Activated CD4-positive, alpha-beta T cell treated with anti-CD3 and anti-CD28 coated beads for 36 hours (primary cell): ENCODE measurements at regions of chr11 and their contacts with region 1.

Region 1: GRCh38 chr11:74321487-74322188 is 10.2 kb upstream of the P4HA3 start:
- DNase-seq: peak; percentile 54
- ATAC-seq: peak; percentile 33
- H3K4me3 Mint-ChIP-seq: no peak overlapping the region
- H3K27ac Mint-ChIP-seq: no peak overlapping the region
- H3K4me1 Mint-ChIP-seq: no peaks in the 10 kb centered on the region
- H3K27me3 Mint-ChIP-seq: no peaks in the 10 kb centered on the region

Region 2: GRCh38 chr11:73995247-73995646 is 326.4 kb before region 1 on chr11:
- CTCF ChIA-PET with region 1: no interaction called
- POLR2A ChIA-PET with region 1: no interaction called
- intact Hi-C with region 1: no loop called
- DNase-seq: no peak
- ATAC-seq: peak; percentile 80
- H3K4me3 Mint-ChIP-seq: peak overlapping the region; percentile 37
- H3K27ac Mint-ChIP-seq: peak overlapping the region; percentile 92
- H3K4me1 Mint-ChIP-seq: peaks cover 72% of the 10 kb centered on the region
- H3K27me3 Mint-ChIP-seq: no peaks in the 10 kb centered on the region

Region 3: GRCh38 chr11:74299015-74299414 is 22.6 kb before region 1 on chr11:
- CTCF ChIA-PET with region 1: interaction called, 20 read pairs
- POLR2A ChIA-PET with region 1: no interaction called
- intact Hi-C with region 1: no loop called
- DNase-seq: no peak
- ATAC-seq: no peak
- H3K4me3 Mint-ChIP-seq: no peak overlapping the region
- H3K27ac Mint-ChIP-seq: no peak overlapping the region
- H3K4me1 Mint-ChIP-seq: peaks cover 7% of the 10 kb centered on the region
- H3K27me3 Mint-ChIP-seq: no peaks in the 10 kb centered on the region